ENCODE measurements at regions of chr17 and their contacts with region 1.

Region 1: GRCh38 chr17:7687908-7688807 is at the start of gene WRAP53:
- DNase-seq: peak; percentile 93 to 98 (median 95)
- ATAC-seq: peak; percentile 75
- H3K4me3 ChIP-seq: peak within 1 kb of the TSS; percentile 72
- H3K4me3 Mint-ChIP-seq: peak within 1 kb of the TSS; percentile 99
- H3K27ac ChIP-seq: peak within 1 kb of the TSS; percentile 96 to 98
- H3K27ac Mint-ChIP-seq: peak within 1 kb of the TSS; percentile 100
- H3K4me1 ChIP-seq: peaks cover 38% of the 10 kb centered on the region
- H3K4me1 Mint-ChIP-seq: peaks cover 46% of the 10 kb centered on the region
- H3K27me3 ChIP-seq: no peaks in the 10 kb centered on the region
- H3K27me3 Mint-ChIP-seq: peaks cover 7% of the 10 kb centered on the region
- CTCF ChIP-seq: peak; percentile 100
- total RNA-seq, gene WRAP53: 3.9 to 4.0 TPM

Region 2: DNA sequence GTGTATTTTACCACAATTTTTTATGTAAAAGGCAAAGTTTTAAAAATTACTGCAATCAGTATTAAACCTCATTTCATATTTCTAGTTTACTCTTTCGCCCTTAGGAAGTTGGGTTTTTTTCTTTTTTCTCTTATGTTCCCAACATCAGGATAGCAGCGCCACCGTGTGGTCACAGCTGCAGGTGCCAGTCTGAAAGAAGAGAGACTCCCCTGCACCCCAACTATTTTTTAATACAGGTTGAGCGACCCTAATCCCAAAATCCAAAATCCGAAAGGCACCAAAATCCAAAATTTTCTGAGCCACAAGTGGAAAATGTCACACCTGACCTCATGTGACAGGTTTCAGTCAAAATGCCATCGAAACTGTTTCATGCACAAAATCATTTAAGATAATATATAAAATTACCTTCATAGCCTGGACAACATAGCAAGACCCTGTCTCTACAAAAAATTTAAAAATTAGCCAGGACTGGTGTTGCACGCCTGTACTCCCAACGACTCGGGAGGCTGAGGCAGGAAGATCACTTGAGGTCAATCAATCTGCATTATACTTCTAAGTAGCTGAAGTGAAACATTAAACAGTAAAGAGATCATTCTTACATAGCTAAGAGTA is 551.8 kb before region 1 on chr17:
- CTCF ChIA-PET with region 1: no interaction called
- POLR2A ChIA-PET with region 1: no interaction called
- intact Hi-C with region 1: no loop called
- DNase-seq: peak; percentile 67 to 92 (median 78)
- ATAC-seq: no peak
- H3K4me3 ChIP-seq: no peak overlapping the region
- H3K4me3 Mint-ChIP-seq: no peak overlapping the region
- H3K27ac ChIP-seq: no peak overlapping the region
- H3K27ac Mint-ChIP-seq: peak overlapping the region; percentile 18
- H3K4me1 ChIP-seq: peaks cover 30% of the 10 kb centered on the region
- H3K4me1 Mint-ChIP-seq: peaks cover 24% of the 10 kb centered on the region
- H3K27me3 ChIP-seq: peaks cover 0 to 7% of the 10 kb centered on the region in 2 experiments
- H3K27me3 Mint-ChIP-seq: peaks cover 8% of the 10 kb centered on the region
- CTCF ChIP-seq: peak; percentile 94

Region 3: GRCh38 chr17:7252176-7253043 is 435.7 kb before region 1 on chr17 and contains the start of gene ELP5:
- CTCF ChIA-PET with region 1: no interaction called
- POLR2A ChIA-PET with region 1: no interaction called
- intact Hi-C with region 1: loop called in 1 of 2 experiments (anchors 2 kb)
- DNase-seq: peak; percentile 64 to 99 (median 80)
- ATAC-seq: peak; percentile 39
- H3K4me3 ChIP-seq: peak within 1 kb of the TSS; percentile 71
- H3K4me3 Mint-ChIP-seq: peak within 1 kb of the TSS; percentile 94
- H3K27ac ChIP-seq: peak within 1 kb of the TSS; percentile 99
- H3K27ac Mint-ChIP-seq: peak within 1 kb of the TSS; percentile 100
- H3K4me1 ChIP-seq: peaks cover 36% of the 10 kb centered on the region
- H3K4me1 Mint-ChIP-seq: peaks cover 45% of the 10 kb centered on the region
- H3K27me3 ChIP-seq: no peaks in the 10 kb centered on the region
- H3K27me3 Mint-ChIP-seq: no peaks in the 10 kb centered on the region
- CTCF ChIP-seq: peak; percentile 28
- total RNA-seq, gene ELP5: 20.1 to 21.3 TPM

Region 4: DNA sequence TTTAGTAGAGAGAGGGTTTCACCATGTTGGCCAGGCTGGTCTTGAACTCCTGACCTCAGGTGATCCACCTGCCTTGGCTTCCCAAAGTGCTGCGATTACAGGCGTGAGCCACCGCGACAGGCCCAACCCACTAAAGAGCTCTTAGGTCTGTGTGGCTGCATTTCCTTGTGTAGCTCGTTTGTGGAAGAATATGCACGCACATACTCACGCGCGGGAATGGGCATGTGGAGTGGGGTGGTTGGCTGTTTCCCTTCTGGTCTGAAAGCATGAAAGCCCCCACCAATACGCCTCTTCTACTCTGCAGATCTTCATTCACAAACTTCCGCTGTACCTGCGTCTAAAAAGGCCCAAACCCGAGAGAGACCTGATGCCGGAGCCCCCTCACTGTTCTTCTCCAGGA is 233.2 kb before region 1 on chr17:
- CTCF ChIA-PET with region 1: no interaction called
- POLR2A ChIA-PET with region 1: interaction called, 15 read pairs
- intact Hi-C with region 1: no loop called
- DNase-seq: no peak
- ATAC-seq: no peak
- H3K4me3 ChIP-seq: peak overlapping the region; percentile 94
- H3K4me3 Mint-ChIP-seq: peak overlapping the region; percentile 94
- H3K27ac ChIP-seq: peak overlapping the region in 1 of 2 donors; percentile 52
- H3K27ac Mint-ChIP-seq: peak overlapping the region; percentile 85
- H3K4me1 ChIP-seq: peaks cover 23% of the 10 kb centered on the region
- H3K4me1 Mint-ChIP-seq: peaks cover 39% of the 10 kb centered on the region
- H3K27me3 ChIP-seq: no peaks in the 10 kb centered on the region
- H3K27me3 Mint-ChIP-seq: no peaks in the 10 kb centered on the region
- CTCF ChIP-seq: no peak

Region 5: DNA sequence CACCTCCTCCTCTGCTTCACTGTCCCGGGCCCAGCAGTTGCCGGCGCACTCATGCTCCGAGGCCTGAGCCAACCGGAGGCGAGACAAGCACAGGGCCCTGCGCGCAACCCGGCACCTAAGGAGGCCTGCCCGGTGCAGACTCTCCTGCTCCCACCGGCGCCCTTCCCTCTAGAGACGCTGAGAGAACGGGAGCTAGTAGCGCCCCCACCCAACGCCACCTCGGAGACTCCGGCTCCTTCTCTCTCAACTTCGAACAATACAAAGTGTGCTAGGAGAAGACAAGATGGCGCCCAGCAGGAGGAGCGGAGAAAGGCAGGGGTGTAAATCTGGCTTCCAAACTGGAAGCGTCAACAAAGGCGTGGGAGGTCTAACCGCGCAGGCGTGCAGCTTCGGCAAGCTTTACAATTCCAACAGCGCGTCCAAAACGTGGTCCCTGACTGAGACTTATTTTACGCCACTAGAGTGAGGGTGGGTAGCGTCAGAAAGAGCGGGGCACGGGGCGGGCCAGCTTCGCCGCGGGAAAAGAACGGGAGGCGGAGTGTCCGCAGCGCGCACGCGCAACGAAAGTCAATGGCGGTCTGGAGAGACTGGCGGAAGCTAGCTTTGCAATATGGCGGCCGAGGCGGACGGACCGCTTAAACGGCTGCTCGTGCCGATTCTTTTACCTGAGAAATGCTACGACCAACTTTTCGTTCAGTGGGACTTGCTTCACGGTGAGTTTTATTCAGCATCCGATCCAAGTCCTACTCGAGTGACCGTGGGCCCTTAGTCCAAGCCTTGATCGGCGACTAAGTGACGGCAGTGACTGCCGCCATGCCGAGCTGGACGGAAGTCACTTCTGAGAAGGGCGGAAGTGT is 104.7 kb before region 1 on chr17 and contains the start of gene MPDU1:
- CTCF ChIA-PET with region 1: interaction called, 21 read pairs
- POLR2A ChIA-PET with region 1: interaction called, 140 read pairs
- intact Hi-C with region 1: loop called in 1 of 2 experiments (anchors 5 kb)
- DNase-seq: peak; percentile 89 to 98 (median 94)
- ATAC-seq: peak; percentile 85
- H3K4me3 ChIP-seq: peak within 1 kb of the TSS; percentile 86
- H3K4me3 Mint-ChIP-seq: peak within 1 kb of the TSS; percentile 98
- H3K27ac ChIP-seq: peak within 1 kb of the TSS; percentile 78 to 98
- H3K27ac Mint-ChIP-seq: peak within 1 kb of the TSS; percentile 98
- H3K4me1 ChIP-seq: peaks cover 56% of the 10 kb centered on the region
- H3K4me1 Mint-ChIP-seq: peaks cover 52% of the 10 kb centered on the region
- H3K27me3 ChIP-seq: no peaks in the 10 kb centered on the region
- H3K27me3 Mint-ChIP-seq: no peaks in the 10 kb centered on the region
- CTCF ChIP-seq: no peak
- total RNA-seq, gene MPDU1: 12.0 to 12.9 TPM

Region 6: GRCh38 chr17:7650509-7651096 is 37.6 kb before region 1 on chr17 and contains the start of gene ATP1B2:
- CTCF ChIA-PET with region 1: interaction called, 21 read pairs
- POLR2A ChIA-PET with region 1: interaction called, 78 read pairs
- intact Hi-C with region 1: loop called in 1 of 2 experiments (anchors 5 kb)
- DNase-seq: peak; percentile 56 to 88 (median 69)
- ATAC-seq: peak; percentile 94
- H3K4me3 ChIP-seq: peak within 1 kb of the TSS; percentile 52
- H3K4me3 Mint-ChIP-seq: peak within 1 kb of the TSS; percentile 85
- H3K27ac ChIP-seq: no peak within 1 kb of the TSS
- H3K27ac Mint-ChIP-seq: no peak within 1 kb of the TSS
- H3K4me1 ChIP-seq: peaks cover 23% of the 10 kb centered on the region
- H3K4me1 Mint-ChIP-seq: peaks cover 22% of the 10 kb centered on the region
- H3K27me3 ChIP-seq: peaks cover 27 to 43% of the 10 kb centered on the region in 2 experiments
- H3K27me3 Mint-ChIP-seq: peaks cover 62% of the 10 kb centered on the region
- CTCF ChIP-seq: no peak
- total RNA-seq, gene ATP1B2: 0.17 to 0.69 TPM

Region 7: GRCh38 chr17:7729816-7730215 is 41.7 kb after region 1 on chr17:
- CTCF ChIA-PET with region 1: no interaction called
- POLR2A ChIA-PET with region 1: no interaction called
- intact Hi-C with region 1: no loop called
- DNase-seq: no peak
- ATAC-seq: no peak
- H3K4me3 ChIP-seq: no peak overlapping the region
- H3K4me3 Mint-ChIP-seq: no peak overlapping the region
- H3K27ac ChIP-seq: no peak overlapping the region
- H3K27ac Mint-ChIP-seq: no peak overlapping the region
- H3K4me1 ChIP-seq: no peaks in the 10 kb centered on the region
- H3K4me1 Mint-ChIP-seq: no peaks in the 10 kb centered on the region
- H3K27me3 ChIP-seq: no peaks in the 10 kb centered on the region
- H3K27me3 Mint-ChIP-seq: peaks cover 8% of the 10 kb centered on the region
- CTCF ChIP-seq: no peak

Region 8: GRCh38 chr17:8118769-8119580 is 430.8 kb after region 1 on chr17:
- CTCF ChIA-PET with region 1: interaction called, 3 read pairs
- POLR2A ChIA-PET with region 1: interaction called, 10 read pairs
- intact Hi-C with region 1: no loop called
- DNase-seq: peak; percentile 75 to 92 (median 81)
- ATAC-seq: peak; percentile 60
- H3K4me3 ChIP-seq: peak overlapping the region; percentile 57
- H3K4me3 Mint-ChIP-seq: peak overlapping the region; percentile 99
- H3K27ac ChIP-seq: peak overlapping the region; percentile 7 to 50
- H3K27ac Mint-ChIP-seq: peak overlapping the region; percentile 100
- H3K4me1 ChIP-seq: peaks cover 65% of the 10 kb centered on the region
- H3K4me1 Mint-ChIP-seq: peaks cover 53% of the 10 kb centered on the region
- H3K27me3 ChIP-seq: peaks cover 45 to 53% of the 10 kb centered on the region in 2 experiments
- H3K27me3 Mint-ChIP-seq: peaks cover 66% of the 10 kb centered on the region
- CTCF ChIP-seq: peak; percentile 81

Measured in CD4-positive, alpha-beta T cell (primary cell).